ENCODE measurements at regions of chr1 and their contacts with region 1.

Region 1: GRCh38 chr1:20212685-20213331 is 26.5 kb upstream of the PLA2G2C start:
- DNase-seq: peak; percentile 22
- H3K4me3 Mint-ChIP-seq: no peak overlapping the region
- H3K27ac Mint-ChIP-seq: no peak overlapping the region
- H3K4me1 Mint-ChIP-seq: peaks cover 15% of the 10 kb centered on the region
- H3K27me3 Mint-ChIP-seq: peaks cover 41% of the 10 kb centered on the region

Region 2: DNA sequence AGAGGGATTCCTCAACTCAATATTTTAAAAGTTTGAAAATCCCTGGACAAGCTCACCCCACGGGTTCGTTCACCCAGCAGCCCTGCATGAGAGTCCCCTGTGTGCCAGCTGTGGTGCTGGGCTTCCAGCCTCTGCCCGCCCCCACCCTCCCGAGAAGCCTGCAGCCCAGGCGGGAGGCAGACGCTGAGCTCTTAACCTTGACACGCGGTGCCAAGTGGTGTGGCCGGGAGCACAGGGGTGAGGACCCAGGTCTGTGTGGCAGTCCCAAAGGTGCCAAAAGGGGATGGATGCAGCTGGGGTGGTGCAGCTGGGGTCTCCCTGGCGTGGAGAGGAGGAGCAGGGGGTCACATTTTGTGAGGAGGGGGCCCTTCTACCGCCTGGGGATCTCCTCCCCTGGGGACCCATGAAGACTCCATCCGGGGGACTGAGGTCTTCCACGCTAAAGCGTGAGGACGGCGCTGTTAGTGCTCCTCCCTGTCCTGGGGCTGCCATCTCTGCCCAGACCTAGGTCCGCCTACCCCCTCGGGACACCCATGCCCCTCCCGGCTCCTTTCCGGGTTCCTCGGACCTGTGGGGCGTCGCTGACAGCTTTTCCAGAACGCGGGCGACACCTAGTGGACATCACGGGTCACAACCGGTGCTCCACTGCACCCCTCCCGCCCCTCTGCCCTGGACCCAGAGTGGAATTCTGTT is 60.8 kb before region 1 on chr1:
- intact Hi-C with region 1: no loop called
- DNase-seq: peak; percentile 67
- H3K4me3 Mint-ChIP-seq: peak overlapping the region; percentile 49
- H3K27ac Mint-ChIP-seq: no peak overlapping the region
- H3K4me1 Mint-ChIP-seq: peaks cover 8% of the 10 kb centered on the region
- H3K27me3 Mint-ChIP-seq: no peaks in the 10 kb centered on the region

Region 3: GRCh38 chr1:20430355-20431175 is 217.8 kb after region 1 on chr1:
- intact Hi-C with region 1: loop called (anchors 1 kb)
- DNase-seq: no peak
- H3K4me3 Mint-ChIP-seq: no peak overlapping the region
- H3K27ac Mint-ChIP-seq: no peak overlapping the region
- H3K4me1 Mint-ChIP-seq: peaks cover 11% of the 10 kb centered on the region
- H3K27me3 Mint-ChIP-seq: peaks cover 21% of the 10 kb centered on the region

Region 4: GRCh38 chr1:20493839-20494608 is 281.2 kb after region 1 on chr1:
- intact Hi-C with region 1: loop called (anchors 2 kb)
- DNase-seq: peak; percentile 71
- H3K4me3 Mint-ChIP-seq: no peak overlapping the region
- H3K27ac Mint-ChIP-seq: no peak overlapping the region
- H3K4me1 Mint-ChIP-seq: peaks cover 7% of the 10 kb centered on the region
- H3K27me3 Mint-ChIP-seq: peaks cover 21% of the 10 kb centered on the region